Caco-2 (cell line): ENCODE measurements at regions of chr20 and their contacts with region 1.

Region 1: GRCh38 chr20:22403632-22404361 is 180.6 kb downstream of the FOXA2 start:
- DNase-seq: peak; percentile 53 to 60
- H3K4me3 ChIP-seq: peak overlapping the region; percentile 24
- H3K4me3 Mint-ChIP-seq: peak overlapping the region; percentile 72
- H3K27ac Mint-ChIP-seq: peak overlapping the region; percentile 39
- H3K4me1 ChIP-seq: peaks cover 15% of the 10 kb centered on the region
- H3K4me1 Mint-ChIP-seq: peaks cover 35% of the 10 kb centered on the region
- H3K27me3 ChIP-seq: no peaks in the 10 kb centered on the region
- H3K27me3 Mint-ChIP-seq: no peaks in the 10 kb centered on the region
- CTCF ChIP-seq: no peak

Region 2: GRCh38 chr20:22339091-22339881 is 64.5 kb before region 1 on chr20:
- CTCF ChIA-PET with region 1: no interaction called
- POLR2A ChIA-PET with region 1: no interaction called
- intact Hi-C with region 1: loop called (anchors 1 kb)
- DNase-seq: peak; percentile 67 to 82
- H3K4me3 ChIP-seq: no peak overlapping the region
- H3K4me3 Mint-ChIP-seq: peak overlapping the region; percentile 46
- H3K27ac Mint-ChIP-seq: peak overlapping the region; percentile 32
- H3K4me1 ChIP-seq: no peaks in the 10 kb centered on the region
- H3K4me1 Mint-ChIP-seq: peaks cover 12% of the 10 kb centered on the region
- H3K27me3 ChIP-seq: no peaks in the 10 kb centered on the region
- H3K27me3 Mint-ChIP-seq: no peaks in the 10 kb centered on the region
- CTCF ChIP-seq: peak; percentile 80 to 83

Region 3: GRCh38 chr20:22471156-22471844 is 67.5 kb after region 1 on chr20:
- CTCF ChIA-PET with region 1: no interaction called
- POLR2A ChIA-PET with region 1: no interaction called
- intact Hi-C with region 1: loop called (anchors 5 kb)
- DNase-seq: peak in 1 of 2 experiments; percentile 29
- H3K4me3 ChIP-seq: no peak overlapping the region
- H3K4me3 Mint-ChIP-seq: no peak overlapping the region
- H3K27ac Mint-ChIP-seq: peak overlapping the region; percentile 28
- H3K4me1 ChIP-seq: peaks cover 17% of the 10 kb centered on the region
- H3K4me1 Mint-ChIP-seq: peaks cover 11% of the 10 kb centered on the region
- H3K27me3 ChIP-seq: no peaks in the 10 kb centered on the region
- H3K27me3 Mint-ChIP-seq: no peaks in the 10 kb centered on the region
- CTCF ChIP-seq: no peak

Region 4: DNA sequence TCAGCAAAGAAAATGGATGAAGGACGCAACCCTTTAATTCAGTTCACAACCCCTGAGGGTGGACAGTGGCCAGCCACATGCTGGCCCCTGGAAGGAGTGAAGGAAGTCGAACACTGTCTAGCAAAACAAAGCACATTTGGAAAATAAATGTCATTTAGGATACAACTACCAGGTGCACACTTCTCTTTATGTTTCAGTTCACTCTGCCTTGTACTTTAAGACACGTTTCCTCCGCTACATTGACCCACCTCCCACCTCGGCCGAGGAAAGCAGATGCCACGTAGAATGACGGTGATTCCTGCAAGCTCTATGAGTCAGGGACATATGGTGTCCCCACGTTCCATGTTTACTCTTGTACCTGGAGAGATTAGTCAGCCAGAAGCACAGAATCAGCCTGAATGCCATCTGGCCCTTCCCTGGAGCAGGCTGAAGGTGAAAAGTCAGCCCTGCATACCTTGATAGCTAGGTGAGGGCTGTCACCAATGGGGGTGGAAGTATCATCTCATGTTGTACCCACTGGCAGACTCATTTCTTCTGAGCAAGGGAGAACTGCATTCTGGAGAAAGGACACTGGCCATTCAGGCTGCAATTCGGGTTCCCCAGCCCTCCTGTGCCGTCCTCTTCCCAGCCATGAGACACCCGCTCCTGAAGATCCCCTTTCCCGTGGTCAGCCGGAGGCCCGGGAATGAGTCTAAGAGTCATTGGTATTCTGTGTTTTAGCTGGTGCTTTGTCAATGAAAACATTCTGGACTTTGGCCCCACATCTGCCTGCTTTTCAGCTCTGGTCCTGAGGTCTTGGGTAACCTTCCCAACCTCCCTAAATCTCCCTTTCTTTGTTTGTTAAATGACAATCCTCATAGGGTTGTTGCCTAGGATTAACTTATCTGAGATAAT is 119.9 kb after region 1 on chr20:
- CTCF ChIA-PET with region 1: no interaction called
- POLR2A ChIA-PET with region 1: no interaction called
- intact Hi-C with region 1: loop called (anchors 5 kb)
- DNase-seq: peak; percentile 90 to 92
- H3K4me3 ChIP-seq: peak overlapping the region; percentile 26
- H3K4me3 Mint-ChIP-seq: peak overlapping the region; percentile 82
- H3K27ac Mint-ChIP-seq: peak overlapping the region; percentile 99
- H3K4me1 ChIP-seq: peaks cover 41% of the 10 kb centered on the region
- H3K4me1 Mint-ChIP-seq: peaks cover 40% of the 10 kb centered on the region
- H3K27me3 ChIP-seq: no peaks in the 10 kb centered on the region
- H3K27me3 Mint-ChIP-seq: no peaks in the 10 kb centered on the region
- CTCF ChIP-seq: no peak